Prostate gland (tissue), 2 donors: ENCODE measurements at regions of chr3 and their contacts with region 1.

Region 1: GRCh38 chr3:9302425-9303181 is 53.2 kb upstream of the SRGAP3 start:
- DNase-seq: peak; percentile 80
- H3K4me3 ChIP-seq: peak overlapping the region; percentile 4 to 13
- H3K27ac ChIP-seq: no peak overlapping the region
- H3K4me1 ChIP-seq: no peaks in the 10 kb centered on the region
- H3K27me3 ChIP-seq: no peaks in the 10 kb centered on the region
- CTCF ChIP-seq: peak; percentile 91 to 97 (median 96)
- POLR2A ChIP-seq: no peak

Region 2: GRCh38 chr3:8970971-8971589 is 331.5 kb before region 1 on chr3:
- intact Hi-C with region 1: loop called (anchors 5 kb)
- DNase-seq: peak; percentile 60
- H3K4me3 ChIP-seq: no peak overlapping the region
- H3K27ac ChIP-seq: no peak overlapping the region
- H3K4me1 ChIP-seq: peaks cover 2% of the 10 kb centered on the region
- H3K27me3 ChIP-seq: no peaks in the 10 kb centered on the region
- CTCF ChIP-seq: peak; percentile 95 to 98 (median 97)
- POLR2A ChIP-seq: no peak

Region 3: GRCh38 chr3:8996681-8997121 is 305.9 kb before region 1 on chr3:
- intact Hi-C with region 1: loop called (anchors 5 kb)
- DNase-seq: peak; percentile 21
- H3K4me3 ChIP-seq: no peak overlapping the region
- H3K27ac ChIP-seq: no peak overlapping the region
- H3K4me1 ChIP-seq: no peaks in the 10 kb centered on the region
- H3K27me3 ChIP-seq: no peaks in the 10 kb centered on the region
- CTCF ChIP-seq: peak in 2 of 4 experiments; percentile 17 to 32
- POLR2A ChIP-seq: no peak

Region 4: GRCh38 chr3:9067352-9067975 is 235.1 kb before region 1 on chr3:
- intact Hi-C with region 1: loop called (anchors 2 kb)
- DNase-seq: peak; percentile 11
- H3K4me3 ChIP-seq: no peak overlapping the region
- H3K27ac ChIP-seq: no peak overlapping the region
- H3K4me1 ChIP-seq: no peaks in the 10 kb centered on the region
- H3K27me3 ChIP-seq: no peaks in the 10 kb centered on the region
- CTCF ChIP-seq: peak; percentile 62 to 71 (median 67)
- POLR2A ChIP-seq: no peak

Region 5: DNA sequence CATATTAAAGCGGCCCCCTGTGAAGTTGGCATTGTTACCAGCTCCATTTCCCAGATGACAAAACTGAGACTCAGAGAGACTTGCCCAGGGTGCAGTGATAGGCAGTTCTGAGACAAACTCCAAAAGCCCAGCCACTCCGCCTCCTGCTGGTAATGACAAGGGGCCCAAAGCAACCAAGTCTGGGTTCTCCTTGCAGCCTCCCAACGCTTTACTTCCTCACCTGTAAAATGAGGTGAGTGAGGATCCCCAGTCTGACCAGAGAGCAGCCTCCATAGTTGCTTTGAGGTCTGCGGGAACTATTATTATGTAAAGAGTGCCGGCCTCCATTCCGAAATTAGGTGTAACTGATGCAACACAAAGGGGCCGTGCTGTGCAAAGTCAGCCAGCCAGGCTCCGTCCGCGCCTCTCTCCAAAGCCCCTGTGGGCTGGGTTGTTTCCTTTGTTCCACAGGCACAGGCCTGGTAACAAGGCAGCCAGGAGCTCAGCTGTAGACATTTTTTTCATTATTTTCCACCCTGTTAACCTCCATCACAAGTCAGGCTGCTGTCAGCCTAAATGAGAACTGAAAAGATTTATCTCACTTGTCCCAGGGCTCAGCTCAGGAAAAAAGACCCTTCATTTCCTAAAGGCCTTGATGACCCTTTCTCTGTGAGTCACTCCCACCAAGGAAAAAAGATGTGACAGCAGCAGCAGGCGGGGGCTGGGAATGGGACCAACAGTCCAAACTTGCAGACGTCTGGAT is 200.2 kb before region 1 on chr3:
- intact Hi-C with region 1: loop called (anchors 10 kb)
- DNase-seq: no peak
- H3K4me3 ChIP-seq: no peak overlapping the region
- H3K27ac ChIP-seq: no peak overlapping the region
- H3K4me1 ChIP-seq: no peaks in the 10 kb centered on the region
- H3K27me3 ChIP-seq: no peaks in the 10 kb centered on the region
- CTCF ChIP-seq: no peak
- POLR2A ChIP-seq: no peak